Activated B cell treated with CpG ODN at 0.5 μM for 24 hours (primary cell): ENCODE measurements at regions of chr17 and their contacts with region 1.

Region 1: GRCh38 chr17:7856883-7857723 is at the start of gene NAA38:
- DNase-seq: peak; percentile 88
- ATAC-seq: peak; percentile 83
- H3K4me3 Mint-ChIP-seq: no peak within 1 kb of the TSS
- H3K27ac Mint-ChIP-seq: no peak within 1 kb of the TSS
- H3K4me1 Mint-ChIP-seq: peaks cover 5% of the 10 kb centered on the region
- H3K27me3 Mint-ChIP-seq: no peaks in the 10 kb centered on the region
- CTCF ChIP-seq: no peak
- total RNA-seq, gene NAA38: 36.0 and 47.9 TPM in 2 replicates

Region 2: DNA sequence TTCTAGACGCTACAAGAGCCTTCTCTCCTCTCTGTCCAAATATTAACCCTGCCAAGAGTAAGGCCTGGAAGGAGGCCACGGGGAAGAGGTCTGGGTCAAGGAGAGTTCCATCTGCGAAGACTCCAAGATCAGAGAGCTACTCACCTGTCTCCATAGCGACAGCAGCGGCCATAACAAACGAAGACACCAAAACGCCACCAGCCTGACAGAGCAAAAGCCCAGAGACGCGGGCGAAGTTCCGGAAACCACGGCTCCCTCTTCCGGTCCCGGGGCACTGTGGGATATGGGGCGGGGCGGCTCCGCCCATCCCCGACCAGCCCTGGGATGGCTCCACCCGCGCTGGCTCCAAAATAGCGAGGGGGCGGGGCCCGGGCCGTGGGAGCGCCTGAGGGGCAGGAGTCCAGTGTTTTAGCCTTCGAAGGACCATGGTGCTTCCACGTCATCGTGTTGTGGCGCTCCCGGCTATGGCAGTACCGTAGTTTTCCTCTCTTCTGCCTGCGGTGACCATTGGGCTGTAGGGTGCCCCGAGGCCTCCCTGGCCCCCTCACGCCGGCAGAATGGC is 1205.7 kb before region 1 on chr17 and contains the starts of genes C17orf100 and MED31:
- CTCF ChIA-PET with region 1: no interaction called
- POLR2A ChIA-PET with region 1: no interaction called
- intact Hi-C with region 1: loop called (anchors 5 kb)
- DNase-seq: peak; percentile 97
- ATAC-seq: peak; percentile 90
- H3K4me3 Mint-ChIP-seq: peak within 1 kb of the TSS; percentile 100
- H3K27ac Mint-ChIP-seq: peak within 1 kb of the TSS; percentile 100
- H3K4me1 Mint-ChIP-seq: peaks cover 69% of the 10 kb centered on the region
- H3K27me3 Mint-ChIP-seq: no peaks in the 10 kb centered on the region
- CTCF ChIP-seq: no peak
- total RNA-seq, gene C17orf100: 2.9 and 3.5 TPM in 2 replicates
- total RNA-seq, gene MED31: 16.5 and 23.4 TPM in 2 replicates

Region 3: DNA sequence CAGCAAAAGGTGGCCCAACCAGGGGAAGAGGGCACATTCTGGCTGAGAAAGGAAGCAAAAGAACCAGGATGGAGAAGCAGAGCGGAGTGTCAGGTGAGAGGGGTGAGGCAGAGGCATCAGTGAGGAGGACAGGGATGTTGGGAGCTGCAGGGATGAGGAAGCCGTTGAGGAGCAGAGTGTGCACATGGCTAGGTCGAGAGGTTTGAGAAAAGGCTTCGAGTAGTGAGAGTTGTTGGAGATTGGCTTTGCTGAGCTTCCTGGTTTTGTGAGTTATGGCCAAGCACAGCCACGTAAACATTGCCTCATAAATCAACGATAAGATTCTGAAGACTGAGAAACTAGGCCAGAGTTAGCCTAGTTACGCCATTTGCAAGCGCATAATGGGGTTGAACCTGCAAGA is 112.7 kb before region 1 on chr17:
- CTCF ChIA-PET with region 1: interaction called, 6 read pairs
- POLR2A ChIA-PET with region 1: interaction called, 3 read pairs
- intact Hi-C with region 1: loop called (anchors 2 kb)
- DNase-seq: no peak
- ATAC-seq: no peak
- H3K4me3 Mint-ChIP-seq: no peak overlapping the region
- H3K27ac Mint-ChIP-seq: no peak overlapping the region
- H3K4me1 Mint-ChIP-seq: no peaks in the 10 kb centered on the region
- H3K27me3 Mint-ChIP-seq: peaks cover 13% of the 10 kb centered on the region
- CTCF ChIP-seq: no peak

Region 4: DNA sequence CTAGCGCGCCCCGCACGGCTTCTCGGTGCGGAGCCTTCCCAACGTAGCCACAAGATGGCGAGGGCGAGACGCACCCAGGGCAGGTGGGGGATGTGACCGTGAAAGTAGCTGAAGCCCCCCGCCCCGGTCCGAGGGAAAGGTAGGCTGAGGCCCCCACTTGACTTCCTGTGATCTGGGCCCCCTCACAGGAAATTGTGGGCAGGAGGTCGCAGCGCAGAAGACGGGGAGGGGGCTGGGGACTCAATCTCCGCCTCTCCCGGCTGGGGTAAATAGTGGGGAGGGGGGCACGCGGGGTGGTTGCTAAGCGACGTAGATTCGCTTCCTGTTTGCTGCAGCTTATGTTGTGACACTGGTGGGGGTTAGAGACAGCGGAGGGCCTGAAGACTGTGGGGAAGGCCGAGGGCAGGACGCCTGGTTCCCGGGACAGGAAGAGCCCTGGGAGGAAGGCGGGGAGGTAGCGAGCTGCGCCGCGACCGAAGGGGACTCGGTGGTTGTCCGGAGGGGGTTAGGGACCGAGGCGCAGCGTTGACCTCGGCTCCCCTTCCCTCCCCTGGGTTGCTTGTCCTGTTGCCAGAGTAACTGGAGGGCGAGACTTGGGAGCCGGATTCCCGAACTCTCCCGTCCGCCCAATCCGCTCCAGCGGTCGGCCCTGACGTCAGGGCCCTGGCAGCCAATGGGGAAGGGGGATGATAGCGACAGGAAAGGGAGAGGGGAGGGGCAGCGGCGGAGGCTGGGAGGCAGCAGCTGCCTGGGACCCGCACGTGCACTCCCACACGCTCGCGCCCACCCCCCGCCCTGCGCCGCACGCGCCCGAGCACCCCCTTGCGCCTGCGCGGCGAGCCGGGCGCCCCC is 21.9 kb before region 1 on chr17:
- CTCF ChIA-PET with region 1: interaction called, 14 read pairs
- POLR2A ChIA-PET with region 1: interaction called, 74 read pairs
- intact Hi-C with region 1: loop called (anchors 1 kb)
- DNase-seq: peak; percentile 79
- ATAC-seq: peak; percentile 47
- H3K4me3 Mint-ChIP-seq: peak overlapping the region; percentile 97
- H3K27ac Mint-ChIP-seq: peak overlapping the region; percentile 94
- H3K4me1 Mint-ChIP-seq: peaks cover 53% of the 10 kb centered on the region
- H3K27me3 Mint-ChIP-seq: peaks cover 14% of the 10 kb centered on the region
- CTCF ChIP-seq: no peak

Region 5: DNA sequence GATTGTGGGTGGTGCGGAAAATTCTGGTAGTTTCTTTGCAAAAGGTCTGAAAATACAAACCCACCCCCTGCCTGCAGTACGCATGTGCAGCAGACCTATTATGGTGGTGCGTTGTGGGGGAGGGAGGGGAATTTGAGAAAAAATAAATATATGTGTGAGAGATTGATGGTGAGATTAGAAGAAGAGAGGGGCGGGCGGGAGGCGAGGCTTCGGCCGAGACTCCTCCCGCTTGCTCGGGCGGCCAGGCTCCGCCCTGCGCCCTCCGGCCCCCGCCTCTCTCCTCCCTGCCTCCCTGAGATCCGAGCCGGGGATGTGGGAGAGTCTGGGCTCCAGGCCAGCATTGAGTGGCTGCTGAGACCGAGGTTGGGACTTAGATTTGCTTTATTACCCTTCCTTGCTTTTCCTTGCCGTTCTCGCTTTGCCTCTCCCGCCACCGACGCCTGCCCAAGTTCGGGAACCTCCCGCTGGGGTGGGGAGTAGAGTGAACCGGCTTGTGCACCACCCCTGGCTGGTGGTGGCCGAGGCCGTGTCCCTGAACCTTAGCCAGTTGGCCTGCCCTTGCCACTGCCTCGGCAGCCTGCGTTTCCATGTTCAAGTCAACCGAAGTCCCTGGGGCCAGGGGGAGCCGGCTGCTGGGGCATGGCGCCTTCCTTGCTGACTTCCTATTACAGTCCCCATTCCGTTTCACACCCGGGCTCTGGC is 30.5 kb after region 1 on chr17:
- CTCF ChIA-PET with region 1: interaction called, 6 read pairs
- POLR2A ChIA-PET with region 1: interaction called, 15 read pairs
- intact Hi-C with region 1: loop called (anchors 1 kb)
- DNase-seq: peak; percentile 60
- ATAC-seq: peak; percentile 76
- H3K4me3 Mint-ChIP-seq: no peak overlapping the region
- H3K27ac Mint-ChIP-seq: no peak overlapping the region
- H3K4me1 Mint-ChIP-seq: peaks cover 8% of the 10 kb centered on the region
- H3K27me3 Mint-ChIP-seq: no peaks in the 10 kb centered on the region
- CTCF ChIP-seq: no peak

Region 6: DNA sequence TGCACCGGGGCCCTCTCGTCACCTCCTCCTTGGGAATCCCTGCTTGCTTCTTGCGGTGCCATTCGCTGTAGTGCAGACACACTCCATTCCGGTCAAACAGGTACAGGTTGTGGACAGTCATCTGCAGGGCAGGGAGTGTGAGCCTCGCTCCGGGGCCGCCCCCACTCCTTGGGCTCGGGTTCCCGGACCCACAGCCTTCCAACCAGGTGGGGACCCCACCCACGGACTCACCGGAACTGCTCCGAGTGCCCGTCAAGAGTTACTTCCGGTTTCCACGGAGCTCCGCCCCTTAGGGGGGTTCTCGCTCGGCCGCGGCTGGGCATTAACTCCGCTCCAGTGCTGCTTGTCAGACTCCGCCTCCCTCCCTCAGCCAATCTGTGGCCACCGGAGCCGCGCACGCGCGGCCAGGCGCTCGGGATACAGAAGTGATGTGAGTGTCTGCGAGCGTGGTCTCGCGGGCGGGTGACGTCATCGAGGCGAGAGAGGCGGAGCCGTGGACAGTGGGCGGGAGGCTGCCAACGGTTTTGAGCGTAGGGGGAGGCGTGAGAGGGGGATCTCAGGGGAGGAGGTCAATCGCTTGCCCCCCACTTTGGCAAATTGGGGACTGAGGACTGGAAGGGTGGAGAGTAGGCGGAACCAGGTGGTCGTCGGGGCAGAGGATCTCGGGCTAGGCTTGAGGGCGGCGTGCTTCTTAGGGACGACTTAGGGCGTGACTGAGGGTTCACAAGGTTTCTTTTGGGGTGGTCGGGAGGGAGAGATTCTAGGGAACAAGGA is 74.8 kb after region 1 on chr17 and contains the starts of genes CNTROB and TRAPPC1:
- CTCF ChIA-PET with region 1: no interaction called
- POLR2A ChIA-PET with region 1: interaction called, 12 read pairs
- intact Hi-C with region 1: loop called (anchors 1 kb)
- DNase-seq: peak; percentile 99
- ATAC-seq: peak; percentile 96
- H3K4me3 Mint-ChIP-seq: peak within 1 kb of the TSS; percentile 97
- H3K27ac Mint-ChIP-seq: peak within 1 kb of the TSS; percentile 92
- H3K4me1 Mint-ChIP-seq: peaks cover 48% of the 10 kb centered on the region
- H3K27me3 Mint-ChIP-seq: no peaks in the 10 kb centered on the region
- CTCF ChIP-seq: no peak
- total RNA-seq, gene CNTROB: 23.0 and 24.6 TPM in 2 replicates
- total RNA-seq, gene TRAPPC1: 129 and 167 TPM in 2 replicates

Region 7: GRCh38 chr17:8156246-8156992 is 299.3 kb after region 1 on chr17:
- CTCF ChIA-PET with region 1: no interaction called
- POLR2A ChIA-PET with region 1: interaction called, 4 read pairs
- intact Hi-C with region 1: loop called (anchors 5 kb)
- DNase-seq: peak; percentile 98
- ATAC-seq: peak; percentile 82
- H3K4me3 Mint-ChIP-seq: no peak overlapping the region
- H3K27ac Mint-ChIP-seq: no peak overlapping the region
- H3K4me1 Mint-ChIP-seq: peaks cover 48% of the 10 kb centered on the region
- H3K27me3 Mint-ChIP-seq: no peaks in the 10 kb centered on the region
- CTCF ChIP-seq: no peak